Activated naive CD4-positive, alpha-beta T cell treated with anti-CD3 and anti-CD28 coated beads for 36 hours (primary cell): ENCODE measurements at regions of chr10 and their contacts with region 1.

Region 1: DNA sequence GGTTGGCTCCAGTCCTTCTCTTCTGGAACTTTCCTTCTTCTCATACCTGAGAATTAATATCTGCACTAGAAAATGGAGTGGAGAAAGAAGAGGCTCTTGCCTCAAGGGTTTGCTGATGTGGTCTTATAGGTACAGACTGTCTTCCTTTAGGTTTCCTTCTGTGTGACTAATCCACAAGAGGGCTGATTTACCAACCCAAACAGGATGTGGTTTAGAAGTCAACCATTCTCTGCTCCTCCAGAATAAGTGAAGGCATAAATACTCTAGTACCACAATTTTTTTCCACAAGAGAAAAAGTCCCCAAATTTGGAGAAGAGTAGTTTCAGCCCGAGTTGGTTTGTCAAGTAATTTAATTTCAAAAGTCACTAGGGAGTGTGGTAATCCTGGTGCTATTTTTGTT is 85.8 kb downstream of the NRP1 start:
- DNase-seq: peak; percentile 49
- H3K4me3 Mint-ChIP-seq: no peak overlapping the region
- H3K27ac Mint-ChIP-seq: no peak overlapping the region
- H3K4me1 Mint-ChIP-seq: peaks cover 75% of the 10 kb centered on the region
- H3K27me3 Mint-ChIP-seq: no peaks in the 10 kb centered on the region

Region 2: GRCh38 chr10:32958085-32959005 is 290.3 kb before region 1 on chr10 and contains the start of gene ITGB1:
- CTCF ChIA-PET with region 1: no interaction called
- intact Hi-C with region 1: loop called (anchors 2 kb)
- DNase-seq: peak; percentile 84
- H3K4me3 Mint-ChIP-seq: peak within 1 kb of the TSS; percentile 84
- H3K27ac Mint-ChIP-seq: peak within 1 kb of the TSS; percentile 89
- H3K4me1 Mint-ChIP-seq: peaks cover 40% of the 10 kb centered on the region
- H3K27me3 Mint-ChIP-seq: peaks cover 10% of the 10 kb centered on the region
- total RNA-seq, gene ITGB1: 30.3 to 34.5 TPM

Region 3: GRCh38 chr10:33109788-33110469 is 138.7 kb before region 1 on chr10:
- CTCF ChIA-PET with region 1: no interaction called
- intact Hi-C with region 1: no loop called
- DNase-seq: no peak
- H3K4me3 Mint-ChIP-seq: no peak overlapping the region
- H3K27ac Mint-ChIP-seq: no peak overlapping the region
- H3K4me1 Mint-ChIP-seq: peaks cover 27% of the 10 kb centered on the region
- H3K27me3 Mint-ChIP-seq: peaks cover 5% of the 10 kb centered on the region

Region 4: DNA sequence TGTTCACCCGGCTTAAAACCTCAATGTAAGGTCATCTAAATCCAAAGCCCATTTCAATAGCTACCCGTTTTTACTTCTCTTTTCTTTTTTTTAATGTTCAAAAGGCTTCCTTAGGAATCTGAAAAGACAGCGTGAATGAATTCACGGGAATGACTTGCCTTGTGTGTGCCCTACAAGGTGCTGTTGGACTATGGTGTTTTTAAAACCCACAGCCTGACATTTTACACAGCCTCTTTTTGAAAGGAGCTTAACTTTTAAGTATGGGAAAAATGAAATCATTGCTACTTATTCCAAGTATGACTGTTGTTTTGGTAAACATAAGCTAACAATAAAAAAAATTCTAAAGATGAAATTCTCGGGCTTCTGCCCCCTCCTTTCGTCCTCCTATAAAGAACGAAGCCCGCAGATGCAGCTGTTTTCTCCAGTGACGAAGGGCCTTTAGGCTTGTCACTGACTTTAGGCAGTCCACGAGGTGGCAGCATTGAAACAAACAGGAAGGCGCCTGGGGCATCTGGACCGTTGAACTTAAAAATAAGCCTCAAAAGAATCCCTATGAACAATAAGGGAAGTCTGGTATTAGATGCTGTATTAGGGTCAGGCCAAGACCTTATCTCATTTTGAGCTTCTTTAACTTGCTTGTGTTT is 55.5 kb before region 1 on chr10:
- CTCF ChIA-PET with region 1: interaction called, 10 read pairs
- intact Hi-C with region 1: no loop called
- DNase-seq: peak; percentile 89
- H3K4me3 Mint-ChIP-seq: no peak overlapping the region
- H3K27ac Mint-ChIP-seq: no peak overlapping the region
- H3K4me1 Mint-ChIP-seq: no peaks in the 10 kb centered on the region
- H3K27me3 Mint-ChIP-seq: peaks cover 4% of the 10 kb centered on the region

Region 5: GRCh38 chr10:33258967-33259366 is 10.3 kb after region 1 on chr10:
- CTCF ChIA-PET with region 1: no interaction called
- intact Hi-C with region 1: loop called (anchors 1 kb)
- DNase-seq: no peak
- H3K4me3 Mint-ChIP-seq: no peak overlapping the region
- H3K27ac Mint-ChIP-seq: no peak overlapping the region
- H3K4me1 Mint-ChIP-seq: peaks cover 9% of the 10 kb centered on the region
- H3K27me3 Mint-ChIP-seq: peaks cover 39% of the 10 kb centered on the region

Region 6: GRCh38 chr10:33341637-33342036 is 93.0 kb after region 1 on chr10:
- CTCF ChIA-PET with region 1: no interaction called
- intact Hi-C with region 1: no loop called
- DNase-seq: no peak
- H3K4me3 Mint-ChIP-seq: no peak overlapping the region
- H3K27ac Mint-ChIP-seq: no peak overlapping the region
- H3K4me1 Mint-ChIP-seq: peaks cover 14% of the 10 kb centered on the region
- H3K27me3 Mint-ChIP-seq: peaks cover 33% of the 10 kb centered on the region

Region 7: DNA sequence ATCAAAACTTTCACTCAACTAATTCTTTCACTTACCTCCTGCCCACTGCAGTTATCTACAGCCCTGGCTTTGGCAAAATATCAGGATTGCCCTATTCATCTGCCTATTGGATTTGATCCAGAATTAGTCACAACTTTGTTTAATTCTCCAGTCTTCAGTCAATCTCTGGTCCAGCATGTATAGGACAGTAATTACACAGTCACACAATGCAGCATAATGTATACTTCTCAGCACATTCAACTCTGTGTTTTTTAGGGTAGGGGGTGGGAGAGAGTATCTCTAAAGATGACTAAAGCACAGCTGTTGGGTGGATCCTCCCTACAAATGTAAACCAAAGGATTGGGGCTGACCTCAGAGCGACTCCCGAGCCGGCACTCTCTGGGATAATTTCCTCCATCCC is 103.5 kb after region 1 on chr10:
- CTCF ChIA-PET with region 1: no interaction called
- intact Hi-C with region 1: no loop called
- DNase-seq: no peak
- H3K4me3 Mint-ChIP-seq: no peak overlapping the region
- H3K27ac Mint-ChIP-seq: no peak overlapping the region
- H3K4me1 Mint-ChIP-seq: no peaks in the 10 kb centered on the region
- H3K27me3 Mint-ChIP-seq: peaks cover 4% of the 10 kb centered on the region

Region 8: DNA sequence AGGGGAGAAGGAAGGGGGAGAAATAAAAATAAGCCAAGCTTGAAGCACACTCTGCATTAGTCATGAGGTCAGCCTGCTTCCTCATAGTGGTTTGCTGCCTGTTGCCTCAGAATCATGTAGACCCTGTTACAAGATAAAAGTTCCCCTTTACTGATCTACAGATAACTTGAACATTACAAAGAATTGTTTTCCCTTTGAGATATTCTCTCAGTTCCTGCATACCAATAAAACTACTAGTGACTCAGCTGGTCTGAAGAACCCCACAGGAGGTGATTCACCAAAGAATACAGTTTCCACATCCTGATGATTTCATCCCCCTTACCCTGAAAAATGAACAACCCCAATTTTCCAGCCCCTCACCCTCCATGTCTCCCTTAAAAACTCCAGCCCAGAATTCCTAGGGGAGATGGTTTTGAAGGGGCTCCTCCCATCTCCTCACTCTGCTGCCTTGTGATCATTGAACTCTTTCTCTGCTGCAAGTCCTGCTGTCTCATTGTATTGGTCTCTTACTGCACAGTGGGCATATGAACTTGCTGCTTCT is 117.3 kb after region 1 on chr10:
- CTCF ChIA-PET with region 1: no interaction called
- intact Hi-C with region 1: loop called (anchors 2 kb)
- DNase-seq: peak; percentile 53
- H3K4me3 Mint-ChIP-seq: no peak overlapping the region
- H3K27ac Mint-ChIP-seq: no peak overlapping the region
- H3K4me1 Mint-ChIP-seq: peaks cover 18% of the 10 kb centered on the region
- H3K27me3 Mint-ChIP-seq: peaks cover 22% of the 10 kb centered on the region

Region 9: DNA sequence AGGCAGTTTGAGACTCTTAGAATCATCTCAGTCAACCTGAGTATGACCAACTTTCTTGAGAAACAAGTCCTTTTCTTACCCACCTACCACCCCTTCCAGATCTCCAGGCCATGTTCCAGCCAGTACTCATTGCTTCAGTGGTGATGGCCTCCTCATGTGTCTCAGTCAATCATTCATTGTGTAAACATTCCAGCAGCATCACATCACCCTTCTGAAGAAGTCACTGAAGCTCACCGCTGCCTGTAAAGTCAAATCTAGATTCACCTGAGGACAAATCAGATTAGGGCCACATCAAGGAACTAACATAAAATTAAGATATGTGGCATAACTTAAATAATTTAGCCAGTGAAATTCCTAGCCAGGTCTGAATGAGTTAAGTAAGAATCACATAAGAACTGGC is 553.1 kb after region 1 on chr10:
- CTCF ChIA-PET with region 1: no interaction called
- intact Hi-C with region 1: no loop called
- DNase-seq: no peak
- H3K4me3 Mint-ChIP-seq: no peak overlapping the region
- H3K27ac Mint-ChIP-seq: no peak overlapping the region
- H3K4me1 Mint-ChIP-seq: no peaks in the 10 kb centered on the region
- H3K27me3 Mint-ChIP-seq: no peaks in the 10 kb centered on the region

Region 10: GRCh38 chr10:34121781-34122628 is 873.4 kb after region 1 on chr10:
- CTCF ChIA-PET with region 1: no interaction called
- intact Hi-C with region 1: loop called (anchors 5 kb)
- DNase-seq: peak; percentile 41
- H3K4me3 Mint-ChIP-seq: no peak overlapping the region
- H3K27ac Mint-ChIP-seq: peak overlapping the region; percentile 4
- H3K4me1 Mint-ChIP-seq: peaks cover 28% of the 10 kb centered on the region
- H3K27me3 Mint-ChIP-seq: no peaks in the 10 kb centered on the region